Prostate gland (tissue), 2 donors: ENCODE measurements at regions of chrX and their contacts with region 1.

Region 1: DNA sequence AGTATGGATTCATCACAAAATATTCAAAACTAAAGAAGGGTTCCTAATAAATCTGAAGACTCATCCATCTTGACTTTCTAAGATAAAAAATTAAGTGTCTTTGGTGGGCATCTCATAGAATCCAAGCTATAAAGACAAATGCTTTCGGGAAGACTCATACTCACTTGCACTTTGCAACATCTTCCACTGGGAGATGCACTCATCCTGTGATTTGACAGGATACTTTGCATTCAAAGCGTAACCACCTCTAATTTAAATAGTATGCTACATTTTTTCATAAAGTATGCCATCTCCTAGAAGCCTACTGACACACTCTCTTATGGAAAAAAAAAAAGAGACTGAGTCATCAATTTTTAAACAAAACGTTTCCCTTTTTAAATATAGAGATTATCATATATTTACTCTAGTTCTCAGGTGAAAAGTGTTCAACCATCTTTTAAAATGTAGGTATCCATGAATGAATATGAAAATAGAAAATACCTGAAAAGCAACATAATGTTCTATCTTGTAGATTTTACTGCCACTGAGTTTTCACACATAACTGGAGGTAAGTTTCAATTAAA is 119.6 kb downstream of the KLHL13 start:
- DNase-seq: no peak
- H3K4me3 ChIP-seq: no peak overlapping the region
- H3K27ac ChIP-seq: no peak overlapping the region
- H3K4me1 ChIP-seq: no peaks in the 10 kb centered on the region
- H3K27me3 ChIP-seq: no peaks in the 10 kb centered on the region
- CTCF ChIP-seq: peak in 1 of 4 experiments; percentile 43
- POLR2A ChIP-seq: no peak

Region 2: GRCh38 chrX:118226090-118226428 is 229.1 kb after region 1 on chrX:
- intact Hi-C with region 1: loop called (anchors 10 kb)
- DNase-seq: no peak
- H3K4me3 ChIP-seq: no peak overlapping the region
- H3K27ac ChIP-seq: no peak overlapping the region
- H3K4me1 ChIP-seq: no peaks in the 10 kb centered on the region
- H3K27me3 ChIP-seq: no peaks in the 10 kb centered on the region
- CTCF ChIP-seq: peak in 3 of 4 experiments; percentile 17 to 65 (median 60)
- POLR2A ChIP-seq: no peak

Region 3: GRCh38 chrX:118353081-118353850 is 356.3 kb after region 1 on chrX:
- intact Hi-C with region 1: no loop called
- DNase-seq: no peak
- H3K4me3 ChIP-seq: no peak overlapping the region
- H3K27ac ChIP-seq: no peak overlapping the region
- H3K4me1 ChIP-seq: no peaks in the 10 kb centered on the region
- H3K27me3 ChIP-seq: no peaks in the 10 kb centered on the region
- CTCF ChIP-seq: no peak
- POLR2A ChIP-seq: no peak